ENCODE measurements at regions of chr9 and their contacts with region 1.

Region 1: DNA sequence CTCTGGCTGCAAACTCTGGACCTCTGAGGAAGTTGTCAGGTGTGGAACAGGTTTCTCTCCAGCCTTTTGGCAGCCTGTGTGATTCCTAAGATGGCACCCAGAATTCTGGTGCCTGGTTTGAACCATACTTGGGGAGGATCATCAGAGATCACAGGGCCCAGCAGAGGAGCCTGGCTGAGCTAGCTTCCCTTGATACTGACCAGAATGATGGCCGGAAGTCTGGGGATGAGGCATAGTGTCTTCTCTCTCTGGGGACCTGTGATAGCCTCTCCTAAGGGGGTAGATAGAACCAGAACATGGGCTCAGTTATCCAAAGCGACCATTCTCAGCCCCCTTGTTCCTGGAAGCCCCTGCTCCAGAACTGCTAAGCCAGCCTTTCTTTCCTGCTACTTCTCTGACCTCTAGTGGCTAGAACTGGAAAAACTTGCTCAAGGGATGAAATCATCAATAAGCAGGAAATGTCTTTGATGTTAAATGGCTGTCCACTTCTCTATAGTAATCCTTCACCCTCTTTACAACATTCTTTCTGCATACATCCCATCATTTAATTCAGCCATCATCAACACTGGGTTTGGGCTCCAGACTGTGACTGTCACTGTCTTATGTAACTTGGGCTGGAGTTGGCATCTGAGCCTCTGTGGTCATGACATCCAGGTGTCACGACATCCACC is 55.1 kb downstream of the C9orf152 start:
- DNase-seq: peak; percentile 46 to 50
- H3K4me3 ChIP-seq: no peak overlapping the region
- H3K4me1 ChIP-seq: no peaks in the 10 kb centered on the region
- H3K27me3 ChIP-seq: no peaks in the 10 kb centered on the region

Region 2: DNA sequence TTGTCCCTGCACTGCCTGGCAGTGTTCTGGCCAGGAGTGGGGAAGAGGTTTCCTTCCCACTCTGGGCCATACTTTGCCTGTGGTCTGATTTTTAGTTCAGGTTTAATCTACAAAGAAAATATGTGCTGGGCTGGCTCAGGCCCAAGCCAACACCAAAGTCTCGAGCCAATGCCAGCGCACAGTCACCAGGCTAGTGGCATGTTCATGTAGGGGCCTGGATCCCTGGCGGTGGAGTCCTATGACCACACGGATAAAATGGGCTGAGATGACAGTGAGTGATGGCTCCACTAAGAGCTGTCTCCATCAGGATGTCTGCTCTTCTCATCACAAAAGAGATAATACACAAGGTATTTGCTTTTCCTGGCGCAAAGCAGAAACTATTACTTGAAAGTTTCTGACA is 561.9 kb before region 1 on chr9:
- in situ Hi-C with region 1: loop called (anchors 25 kb)
- DNase-seq: no peak
- H3K4me3 ChIP-seq: no peak overlapping the region
- H3K4me1 ChIP-seq: no peaks in the 10 kb centered on the region
- H3K27me3 ChIP-seq: peaks cover 6% of the 10 kb centered on the region

Region 3: DNA sequence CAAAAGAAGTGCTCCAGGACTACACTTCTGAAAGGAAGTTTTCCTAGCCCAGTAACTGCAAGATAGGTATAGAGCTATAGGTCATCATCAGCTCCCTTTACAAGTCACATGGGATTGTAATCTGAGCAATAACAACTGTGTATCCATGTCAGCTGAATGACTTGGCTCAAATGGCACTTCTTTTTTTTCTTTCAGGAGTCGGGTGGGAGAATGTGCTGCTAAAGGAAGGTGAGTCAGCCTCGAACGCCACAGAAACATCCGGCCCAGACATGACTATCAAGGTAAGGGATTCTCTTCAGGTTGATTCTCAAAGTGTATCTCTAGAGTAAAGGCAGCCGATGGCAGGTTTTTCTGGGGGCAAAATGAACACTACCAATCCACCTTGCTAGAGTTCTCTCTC is 137.1 kb before region 1 on chr9:
- in situ Hi-C with region 1: no loop called
- DNase-seq: no peak
- H3K4me3 ChIP-seq: no peak overlapping the region
- H3K4me1 ChIP-seq: no peaks in the 10 kb centered on the region
- H3K27me3 ChIP-seq: no peaks in the 10 kb centered on the region

Region 4: DNA sequence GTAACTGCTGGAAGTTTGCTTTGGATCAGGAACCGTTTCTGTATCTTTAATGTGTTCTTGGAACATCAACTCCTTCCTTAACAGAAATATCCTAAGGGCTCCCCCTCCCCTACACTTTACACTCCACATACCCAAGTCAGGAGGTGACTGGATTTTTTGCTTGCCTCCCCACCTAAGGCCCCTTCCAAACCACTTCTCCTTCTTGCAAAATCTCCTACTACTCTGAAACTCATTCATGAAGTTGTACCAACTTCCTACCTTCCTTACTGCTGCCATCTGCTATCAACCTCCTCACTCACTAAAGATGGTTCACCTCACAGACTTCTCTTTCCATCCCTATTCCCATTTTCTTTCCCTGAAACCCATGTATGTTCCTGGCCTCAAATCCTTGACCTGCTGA is 87.4 kb after region 1 on chr9:
- in situ Hi-C with region 1: no loop called
- DNase-seq: no peak
- H3K4me3 ChIP-seq: no peak overlapping the region
- H3K4me1 ChIP-seq: 0 out of 2 replicates have a peak, but pooled peaks cover 2% of the 10 kb centered on the region
- H3K27me3 ChIP-seq: no peaks in the 10 kb centered on the region

Measured in HAP-1 (cell line).